ENCODE measurements at regions of chr6 and their contacts with region 1.

Region 1: GRCh38 chr6:111483736-111484632 is 966 bp upstream of the REV3L start:
- DNase-seq: peak; percentile 83
- H3K4me3 Mint-ChIP-seq: peak overlapping the region; percentile 93
- H3K27ac Mint-ChIP-seq: peak overlapping the region; percentile 98
- H3K4me1 Mint-ChIP-seq: peaks cover 56% of the 10 kb centered on the region
- H3K27me3 Mint-ChIP-seq: no peaks in the 10 kb centered on the region

Region 2: DNA sequence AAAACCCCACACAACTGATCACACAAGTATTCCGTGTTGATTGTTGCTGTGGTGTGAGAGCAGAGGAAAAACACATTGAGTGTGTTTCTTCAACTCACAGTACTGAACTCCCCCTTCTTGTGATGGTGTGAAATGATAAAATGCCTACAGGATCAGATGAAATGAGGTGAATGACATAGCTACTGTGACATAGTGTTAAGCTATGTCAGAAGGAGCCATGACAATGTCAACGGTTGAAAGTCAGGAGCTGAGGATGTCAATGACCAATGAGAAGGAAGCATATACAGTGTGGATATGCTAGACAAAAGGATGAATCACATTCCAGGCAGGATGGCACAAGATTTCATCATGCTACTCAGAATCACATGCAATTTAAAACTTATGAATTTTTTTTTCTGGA is 1343.3 kb before region 1 on chr6:
- intact Hi-C with region 1: no loop called
- DNase-seq: no peak
- H3K4me3 Mint-ChIP-seq: no peak overlapping the region
- H3K27ac Mint-ChIP-seq: no peak overlapping the region
- H3K4me1 Mint-ChIP-seq: no peaks in the 10 kb centered on the region
- H3K27me3 Mint-ChIP-seq: peaks cover 2% of the 10 kb centered on the region

Region 3: GRCh38 chr6:110873981-110874879 is 609.8 kb before region 1 on chr6 and contains the start of gene AMD1:
- intact Hi-C with region 1: loop called (anchors 5 kb)
- DNase-seq: peak; percentile 94
- H3K4me3 Mint-ChIP-seq: peak within 1 kb of the TSS; percentile 97
- H3K27ac Mint-ChIP-seq: peak within 1 kb of the TSS; percentile 98
- H3K4me1 Mint-ChIP-seq: peaks cover 37% of the 10 kb centered on the region
- H3K27me3 Mint-ChIP-seq: no peaks in the 10 kb centered on the region
- total RNA-seq, gene AMD1: 101 and 109 TPM in 2 replicates

Region 4: DNA sequence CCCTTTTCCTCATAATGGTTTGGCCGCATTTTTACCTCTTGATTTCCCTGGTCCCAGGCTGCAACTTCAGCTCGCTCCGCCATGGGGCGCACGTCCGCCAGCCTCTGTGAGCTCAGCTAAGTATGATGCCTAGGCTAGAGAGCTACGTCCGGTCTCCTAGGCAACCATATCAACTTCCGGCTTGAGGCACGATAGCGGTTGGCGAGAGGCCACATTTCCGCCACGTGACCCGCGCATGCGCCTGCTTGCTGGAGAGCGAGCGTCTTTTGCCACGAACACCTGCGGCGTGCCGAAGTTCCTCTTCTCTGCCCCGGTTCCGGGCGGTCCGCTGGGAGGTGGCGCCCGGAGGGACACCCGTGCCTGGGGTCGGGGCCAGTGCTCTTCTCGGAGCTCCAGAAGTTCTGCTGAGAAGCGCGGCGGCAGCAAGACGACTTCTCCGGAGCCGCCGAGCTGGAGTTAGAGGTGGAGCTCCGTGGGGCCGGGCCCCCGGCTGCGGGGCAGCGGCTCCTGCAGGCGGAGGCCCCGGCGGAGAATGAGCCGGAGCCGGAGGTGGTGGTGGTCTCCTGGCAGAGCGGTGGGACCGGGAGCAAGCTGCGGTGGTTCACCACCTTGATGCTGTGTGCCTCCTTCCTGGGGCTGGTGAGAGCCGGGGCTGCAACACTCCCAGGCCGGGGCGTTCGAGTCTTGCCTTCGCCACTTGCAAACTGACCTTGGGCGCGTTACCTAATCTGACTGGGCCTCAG is 224.7 kb before region 1 on chr6:
- intact Hi-C with region 1: loop called (anchors 1 kb)
- DNase-seq: peak; percentile 99
- H3K4me3 Mint-ChIP-seq: peak overlapping the region; percentile 81
- H3K27ac Mint-ChIP-seq: peak overlapping the region; percentile 87
- H3K4me1 Mint-ChIP-seq: peaks cover 34% of the 10 kb centered on the region
- H3K27me3 Mint-ChIP-seq: peaks cover 5% of the 10 kb centered on the region

Region 5: GRCh38 chr6:111361648-111362047 is 122.3 kb before region 1 on chr6:
- intact Hi-C with region 1: no loop called
- DNase-seq: no peak
- H3K4me3 Mint-ChIP-seq: no peak overlapping the region
- H3K27ac Mint-ChIP-seq: no peak overlapping the region
- H3K4me1 Mint-ChIP-seq: no peaks in the 10 kb centered on the region
- H3K27me3 Mint-ChIP-seq: no peaks in the 10 kb centered on the region

Region 6: DNA sequence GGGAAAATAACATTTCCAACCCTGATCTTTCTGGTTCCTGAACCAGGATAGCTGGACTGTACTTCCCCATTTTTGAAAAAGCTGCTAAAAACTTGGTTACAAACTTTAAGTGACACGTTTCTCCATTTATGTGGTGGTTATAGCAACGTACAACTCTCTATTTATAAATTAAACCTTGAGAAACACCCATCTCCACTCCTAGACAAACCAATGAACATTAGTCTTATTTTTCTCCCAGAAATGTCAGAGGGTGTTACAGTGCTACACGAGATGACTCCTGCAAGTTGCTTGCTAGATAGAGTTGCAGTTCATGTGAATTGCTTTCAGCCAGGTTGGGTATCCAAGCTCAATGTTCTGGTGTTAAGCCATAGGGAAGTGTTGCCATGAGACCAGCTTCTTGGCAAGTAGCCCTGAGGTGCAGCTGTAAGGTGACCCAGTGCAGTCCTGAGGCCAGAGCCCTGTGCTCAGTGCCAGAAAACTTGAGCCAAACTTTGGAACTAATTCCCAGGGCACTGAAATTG is 50.3 kb after region 1 on chr6:
- intact Hi-C with region 1: loop called (anchors 1 kb)
- DNase-seq: no peak
- H3K4me3 Mint-ChIP-seq: no peak overlapping the region
- H3K27ac Mint-ChIP-seq: no peak overlapping the region
- H3K4me1 Mint-ChIP-seq: peaks cover 49% of the 10 kb centered on the region
- H3K27me3 Mint-ChIP-seq: no peaks in the 10 kb centered on the region

Region 7: DNA sequence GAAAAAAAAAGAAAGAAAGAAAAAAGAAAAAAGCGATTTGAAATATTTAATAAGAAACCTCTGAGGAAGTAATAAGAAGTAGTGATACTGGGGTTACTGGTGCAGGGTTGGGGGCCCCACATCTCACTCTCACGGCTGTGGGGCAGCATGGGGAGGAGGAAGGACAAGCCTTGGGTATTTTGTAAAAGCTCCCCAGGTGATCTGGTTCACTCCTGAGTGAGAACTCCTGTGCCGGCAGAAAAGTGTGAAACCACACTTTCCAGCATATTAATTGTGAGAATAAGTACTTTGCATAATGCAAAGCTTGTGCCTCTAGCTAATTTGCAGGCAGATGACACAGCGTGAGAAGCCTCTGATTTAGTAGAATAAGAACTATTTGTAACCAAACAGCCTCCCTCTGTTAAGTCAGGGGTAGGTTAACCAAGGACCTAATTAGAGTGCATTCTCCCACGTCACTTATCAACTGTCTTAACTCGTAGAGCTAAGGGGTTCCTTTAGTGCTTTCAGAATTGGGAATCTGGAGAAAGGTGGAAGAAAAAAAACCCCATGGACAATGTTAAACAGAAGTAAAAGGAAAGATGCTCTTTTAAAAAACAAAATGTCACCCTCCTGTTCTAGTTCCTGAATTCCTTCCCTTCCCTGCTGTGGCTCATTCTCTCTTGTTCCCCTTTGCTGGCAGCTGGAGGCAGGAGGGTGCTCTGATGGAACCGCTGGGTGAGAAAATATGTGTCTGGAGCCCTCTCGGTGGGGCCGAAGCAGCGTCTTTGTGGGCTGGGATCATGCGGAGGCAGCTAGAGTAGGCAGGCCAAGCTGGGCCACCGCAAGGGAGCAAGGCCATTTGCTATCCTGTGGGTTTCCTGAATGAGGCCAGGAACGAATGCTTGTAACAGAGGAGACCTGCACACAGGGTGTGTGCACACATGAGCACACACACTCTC is 280.5 kb after region 1 on chr6:
- intact Hi-C with region 1: loop called (anchors 5 kb)
- DNase-seq: peak; percentile 41
- H3K4me3 Mint-ChIP-seq: peak overlapping the region; percentile 74
- H3K27ac Mint-ChIP-seq: peak overlapping the region; percentile 90
- H3K4me1 Mint-ChIP-seq: peaks cover 100% of the 10 kb centered on the region
- H3K27me3 Mint-ChIP-seq: no peaks in the 10 kb centered on the region

Region 8: DNA sequence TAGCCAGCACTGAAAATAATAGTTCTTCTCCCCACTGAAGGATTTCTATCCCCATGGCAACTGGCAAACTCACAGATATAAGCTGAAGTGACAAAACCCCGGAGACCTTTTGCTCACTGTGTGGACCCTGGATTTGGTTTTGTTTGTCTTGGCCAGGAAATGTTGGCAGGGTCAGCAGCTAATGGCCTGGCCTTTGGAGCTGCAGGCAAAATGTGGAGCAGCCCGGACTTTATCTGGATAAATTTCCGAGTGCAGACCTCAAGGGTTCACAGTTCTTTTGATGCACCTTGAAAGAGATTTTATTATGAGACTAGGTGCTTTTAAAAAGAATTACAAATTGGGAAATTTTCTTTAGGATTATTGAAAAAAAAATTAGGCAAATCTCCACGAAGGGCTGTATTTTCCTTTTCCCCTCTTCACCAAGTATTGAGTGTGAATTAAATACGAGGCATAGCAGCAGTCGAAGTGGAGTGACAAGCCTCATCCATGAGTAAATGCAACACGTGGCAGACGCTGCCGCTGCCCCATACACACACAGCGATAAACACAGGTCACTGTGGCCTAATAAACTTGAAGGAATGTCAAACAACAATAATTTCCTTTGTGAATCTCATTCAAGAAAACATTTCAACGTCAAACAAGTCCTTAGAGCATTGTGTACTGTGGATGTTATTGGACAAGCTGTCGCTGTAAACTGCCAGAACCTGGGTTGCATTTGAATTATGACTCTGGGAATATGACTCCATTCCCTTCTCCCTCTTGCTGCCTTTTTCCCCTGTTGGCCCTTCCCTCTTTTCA is 534.8 kb after region 1 on chr6:
- intact Hi-C with region 1: loop called (anchors 5 kb)
- DNase-seq: no peak
- H3K4me3 Mint-ChIP-seq: no peak overlapping the region
- H3K27ac Mint-ChIP-seq: no peak overlapping the region
- H3K4me1 Mint-ChIP-seq: peaks cover 50% of the 10 kb centered on the region
- H3K27me3 Mint-ChIP-seq: no peaks in the 10 kb centered on the region